GM10248 (cell line): ENCODE measurements at regions of chr17 and their contacts with region 1.

Region 1: GRCh38 chr17:75749545-75750389 is 15.2 kb downstream of the GALK1 start:
- DNase-seq: peak; percentile 86
- CTCF ChIP-seq: peak; percentile 89

Region 2: DNA sequence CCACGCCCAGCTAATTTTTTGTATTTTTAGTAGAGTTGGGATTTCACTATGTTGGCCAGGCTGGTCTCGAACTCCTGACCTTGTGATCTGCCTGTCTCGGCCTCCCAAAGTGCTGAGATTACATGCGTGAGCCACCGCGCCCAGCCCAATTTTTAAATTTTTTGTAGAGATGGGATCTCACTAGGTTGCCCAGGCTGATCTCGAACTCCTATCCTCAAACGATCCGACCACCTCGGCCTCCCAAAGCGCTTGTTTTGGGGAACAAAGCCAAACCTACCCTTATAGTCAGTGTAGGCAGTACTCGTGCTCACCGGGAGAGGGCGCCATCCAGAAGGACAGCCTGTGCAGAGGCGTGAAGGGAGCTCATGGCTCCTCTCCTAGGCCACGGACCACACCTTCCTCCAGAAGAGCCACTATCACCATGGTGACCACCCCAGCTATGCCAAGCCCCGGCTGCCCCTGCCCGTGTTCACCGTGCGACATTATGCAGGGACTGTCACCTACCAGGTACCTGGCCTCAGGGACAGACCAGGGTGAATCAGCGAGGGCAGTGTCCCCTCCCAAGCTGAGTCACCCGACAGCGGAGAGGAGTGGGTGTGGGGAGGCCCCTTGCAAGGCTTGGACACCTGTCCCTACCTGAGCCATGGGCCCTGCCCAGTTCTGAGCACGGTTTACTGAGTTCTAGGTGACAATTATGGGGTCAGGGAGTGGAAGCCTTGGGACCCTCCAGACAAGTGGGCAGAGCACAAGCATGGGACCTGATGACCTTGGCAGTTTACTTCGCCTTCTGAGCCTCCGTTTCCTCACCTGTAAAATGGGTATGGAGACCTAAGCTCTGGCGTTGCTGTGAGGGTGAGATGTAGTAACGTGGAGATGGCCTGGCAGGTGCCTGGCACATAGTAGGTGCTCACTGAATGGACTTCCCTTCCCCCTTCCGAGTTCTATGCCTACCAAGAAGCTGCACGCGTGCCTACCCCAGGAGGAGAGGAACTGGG is 148.4 kb before region 1 on chr17:
- CTCF ChIA-PET with region 1: interaction called, 165 read pairs
- POLR2A ChIA-PET with region 1: no interaction called
- DNase-seq: peak; percentile 81
- CTCF ChIP-seq: peak; percentile 85

Region 3: DNA sequence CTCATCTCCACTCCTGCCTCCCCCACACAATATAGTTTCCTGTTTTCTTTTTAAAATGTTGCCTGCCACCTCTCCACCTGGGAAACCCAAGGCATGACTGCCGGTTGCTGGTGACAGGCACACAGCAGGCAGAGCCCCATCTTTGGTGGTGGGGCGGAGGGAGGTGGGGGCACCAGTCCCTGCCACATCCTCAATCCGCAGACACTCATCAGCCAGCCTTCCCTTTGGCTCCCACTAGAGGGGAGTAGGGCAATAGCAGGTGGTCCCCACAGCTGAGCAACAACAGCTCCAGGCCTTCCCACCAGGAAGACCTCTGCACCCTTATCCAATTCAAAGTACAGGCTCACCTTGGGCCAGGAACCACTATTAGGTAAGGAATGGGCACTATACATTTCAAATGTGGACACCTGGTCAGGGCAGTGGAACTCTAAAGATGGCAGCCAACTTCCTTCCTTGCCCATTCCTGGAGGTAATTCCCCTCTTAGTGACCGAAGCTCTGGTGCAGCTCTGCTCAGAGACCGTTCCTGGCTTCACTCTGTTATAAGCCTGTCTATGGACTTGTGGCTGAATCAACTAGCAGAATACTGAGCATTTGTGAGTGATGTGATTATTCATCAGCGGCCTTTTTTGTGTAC is 96.7 kb before region 1 on chr17:
- CTCF ChIA-PET with region 1: interaction called, 856 read pairs
- POLR2A ChIA-PET with region 1: no interaction called
- DNase-seq: peak; percentile 58
- CTCF ChIP-seq: peak; percentile 69

Region 4: GRCh38 chr17:75705904-75706714 is 43.7 kb before region 1 on chr17:
- CTCF ChIA-PET with region 1: interaction called, 21 read pairs
- POLR2A ChIA-PET with region 1: no interaction called
- DNase-seq: no peak
- CTCF ChIP-seq: no peak

Region 5: DNA sequence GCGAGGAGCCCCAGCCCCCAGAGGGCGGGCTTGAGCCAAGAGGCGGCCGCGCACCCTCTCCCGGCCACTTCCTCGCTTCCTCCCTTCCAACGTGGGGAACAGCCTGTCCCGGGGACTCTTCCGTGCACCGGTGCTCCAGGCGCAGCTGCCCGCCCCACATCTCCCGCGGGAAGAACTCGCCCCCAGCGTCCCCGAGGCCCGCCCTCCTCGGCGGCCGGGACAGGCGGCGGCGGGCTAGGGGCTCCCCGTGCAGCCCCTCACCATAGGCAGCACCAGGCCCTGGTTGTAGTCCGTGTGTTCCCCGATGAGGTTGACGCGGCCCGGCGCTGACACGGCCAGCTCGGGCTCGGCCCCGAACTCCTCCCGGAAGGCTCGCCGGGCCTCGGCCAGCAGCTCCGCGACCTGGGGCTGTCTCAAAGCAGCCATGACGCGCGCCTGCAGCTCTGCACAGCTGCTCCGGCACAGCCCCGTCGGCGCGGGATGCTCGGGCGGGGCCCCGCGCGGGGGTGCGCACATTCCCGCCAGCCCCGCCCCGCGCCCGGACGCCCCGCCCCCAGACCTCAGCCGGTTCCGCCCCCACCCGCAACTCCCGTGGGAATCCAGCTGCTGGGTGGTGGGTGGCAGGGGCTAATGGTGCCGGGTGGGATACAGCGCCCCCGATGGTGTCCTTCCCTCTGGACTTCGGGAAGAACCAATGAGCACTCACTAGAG is 15.1 kb after region 1 on chr17 and contains the start of gene GALK1:
- CTCF ChIA-PET with region 1: interaction called, 106 read pairs
- POLR2A ChIA-PET with region 1: no interaction called
- DNase-seq: peak; percentile 89
- CTCF ChIP-seq: peak; percentile 88

Region 6: DNA sequence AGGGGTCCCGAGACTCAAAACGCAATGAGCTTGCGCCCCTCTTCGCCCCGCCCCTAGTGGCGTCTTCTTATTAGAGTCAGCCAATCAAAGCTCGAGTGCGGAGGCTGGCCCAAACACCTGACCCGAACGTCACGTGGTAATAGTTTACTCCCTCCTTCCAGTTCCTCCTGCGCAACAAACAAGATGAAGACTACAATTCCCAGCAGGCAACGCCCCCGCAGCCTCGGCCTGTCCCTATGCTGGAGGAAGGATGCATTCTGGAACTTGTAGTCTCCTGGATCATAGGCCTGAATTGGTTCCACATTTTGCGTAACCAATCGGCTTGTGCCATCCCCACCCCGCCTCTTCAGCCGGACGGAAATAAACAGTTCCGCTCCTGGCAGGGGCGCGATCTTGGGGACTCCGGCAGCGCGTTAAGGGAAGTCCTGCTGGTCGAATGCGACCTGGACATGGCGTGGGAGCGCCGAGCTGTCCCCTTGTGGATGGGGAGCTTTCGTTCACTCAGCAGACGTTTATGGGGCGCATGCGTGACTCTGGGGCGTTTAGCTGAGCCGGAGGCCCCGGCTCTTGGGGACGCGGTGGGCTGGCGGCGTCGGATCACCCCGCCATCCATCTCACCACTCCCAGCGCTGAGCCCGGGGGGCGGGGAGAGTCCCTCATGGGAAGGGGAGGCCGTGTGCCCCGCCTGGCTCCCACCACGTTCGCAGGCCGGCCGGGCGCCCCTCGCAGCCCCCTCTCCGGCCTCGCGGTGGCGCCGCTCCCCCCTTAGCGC is 105.7 kb after region 1 on chr17 and contains the start of gene WBP2:
- CTCF ChIA-PET with region 1: interaction called, 13 read pairs
- POLR2A ChIA-PET with region 1: no interaction called
- DNase-seq: peak; percentile 97
- CTCF ChIP-seq: peak; percentile 53